ENCODE measurements at regions of chr1 and their contacts with region 1.

Region 1: GRCh38 chr1:92577261-92577895 is 90.7 kb upstream of the GFI1 start:
- DNase-seq: no peak
- H3K4me3 Mint-ChIP-seq: peak overlapping the region; percentile 93
- H3K27ac Mint-ChIP-seq: peak overlapping the region; percentile 97
- H3K4me1 Mint-ChIP-seq: peaks cover 66% of the 10 kb centered on the region
- H3K27me3 Mint-ChIP-seq: no peaks in the 10 kb centered on the region

Region 2: GRCh38 chr1:92563457-92564216 is 13.7 kb before region 1 on chr1:
- intact Hi-C with region 1: loop called (anchors 1 kb)
- DNase-seq: no peak
- H3K4me3 Mint-ChIP-seq: peak overlapping the region; percentile 7
- H3K27ac Mint-ChIP-seq: peak overlapping the region; percentile 65
- H3K4me1 Mint-ChIP-seq: peaks cover 59% of the 10 kb centered on the region
- H3K27me3 Mint-ChIP-seq: no peaks in the 10 kb centered on the region

Region 3: GRCh38 chr1:92975551-92976232 is 398.3 kb after region 1 on chr1:
- intact Hi-C with region 1: loop called (anchors 5 kb)
- DNase-seq: no peak
- H3K4me3 Mint-ChIP-seq: no peak overlapping the region
- H3K27ac Mint-ChIP-seq: peak overlapping the region; percentile 89
- H3K4me1 Mint-ChIP-seq: peaks cover 58% of the 10 kb centered on the region
- H3K27me3 Mint-ChIP-seq: no peaks in the 10 kb centered on the region

Measured in activated T-helper 2 cell treated with anti-CD3 and anti-CD28 coated beads, Interferon-gamma antibody, Interleukin-2, Interleukin-4, amounts not matched to agents 10 μg/mL and 5 μg/mL and 100 μg/mL, durations not matched to agents 14 hours and 24 hours and 36 hours (primary cell).